Activated naive CD4-positive, alpha-beta T cell treated with anti-CD3 and anti-CD28 coated beads for 36 hours (primary cell): ENCODE measurements at regions of chr6 and their contacts with region 1.

Region 1: GRCh38 chr6:40328405-40328987 is 258.7 kb downstream of the LRFN2 start:
- DNase-seq: peak; percentile 55
- H3K4me3 Mint-ChIP-seq: no peak overlapping the region
- H3K27ac Mint-ChIP-seq: no peak overlapping the region
- H3K4me1 Mint-ChIP-seq: peaks cover 2% of the 10 kb centered on the region
- H3K27me3 Mint-ChIP-seq: peaks cover 18% of the 10 kb centered on the region

Region 2: GRCh38 chr6:40587240-40588069 is 259.0 kb after region 1 on chr6 and contains the start of gene LRFN2:
- CTCF ChIA-PET with region 1: interaction called, 3 read pairs
- intact Hi-C with region 1: loop called (anchors 1 kb)
- DNase-seq: peak; percentile 71
- H3K4me3 Mint-ChIP-seq: peak within 1 kb of the TSS; percentile 77
- H3K27ac Mint-ChIP-seq: no peak within 1 kb of the TSS
- H3K4me1 Mint-ChIP-seq: peaks cover 8% of the 10 kb centered on the region
- H3K27me3 Mint-ChIP-seq: peaks cover 48% of the 10 kb centered on the region
- total RNA-seq, gene LRFN2: not detected

Region 3: DNA sequence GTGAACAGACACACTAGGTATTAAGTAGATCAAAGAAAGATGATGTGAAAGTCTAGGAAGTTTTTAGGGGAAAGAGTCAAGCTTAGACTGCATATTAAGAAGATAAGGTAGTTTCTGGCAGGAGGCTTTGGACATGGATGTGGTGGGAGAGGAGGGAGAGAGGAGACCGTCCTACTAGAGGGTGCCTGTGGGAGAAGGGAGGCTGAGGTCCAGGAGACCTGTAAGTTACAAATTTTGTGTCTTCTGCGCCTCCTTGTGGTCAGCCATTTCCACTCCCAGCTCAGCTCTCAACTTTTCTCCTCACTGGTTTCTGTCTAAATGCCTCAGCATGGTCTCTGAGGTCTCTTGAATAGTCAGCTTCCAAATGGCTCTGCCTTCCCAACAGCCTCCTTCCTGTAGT is 517.1 kb after region 1 on chr6:
- CTCF ChIA-PET with region 1: no interaction called
- intact Hi-C with region 1: loop called (anchors 1 kb)
- DNase-seq: peak; percentile 51
- H3K4me3 Mint-ChIP-seq: no peak overlapping the region
- H3K27ac Mint-ChIP-seq: no peak overlapping the region
- H3K4me1 Mint-ChIP-seq: no peaks in the 10 kb centered on the region
- H3K27me3 Mint-ChIP-seq: peaks cover 21% of the 10 kb centered on the region